ENCODE measurements at regions of chr5 and their contacts with region 1.

Region 1: DNA sequence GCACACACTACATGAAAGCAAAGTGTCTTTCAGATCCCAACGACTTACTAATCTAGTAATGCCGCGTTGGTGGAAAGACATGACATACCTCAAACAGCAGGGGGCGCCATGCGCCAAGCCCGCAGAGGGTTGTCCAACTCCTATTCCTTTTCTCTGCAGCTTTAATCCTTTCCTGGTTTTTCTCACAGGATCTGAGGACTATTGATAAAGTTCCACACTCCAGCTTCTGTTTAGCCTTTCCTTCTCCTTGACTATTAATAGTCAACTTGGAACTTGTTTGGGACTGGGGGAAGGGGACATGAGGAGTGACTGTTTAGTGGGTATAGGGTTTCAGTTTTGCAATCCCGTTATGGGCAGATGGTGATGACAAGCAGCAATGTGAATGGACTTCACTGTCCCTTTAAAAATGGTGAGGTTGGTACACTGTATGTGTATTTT is 62.9 kb downstream of the OTULIN start:
- DNase-seq: peak; percentile 76
- H3K4me3 Mint-ChIP-seq: no peak overlapping the region
- H3K27ac Mint-ChIP-seq: no peak overlapping the region
- H3K4me1 Mint-ChIP-seq: peaks cover 5% of the 10 kb centered on the region
- H3K27me3 Mint-ChIP-seq: no peaks in the 10 kb centered on the region

Region 2: DNA sequence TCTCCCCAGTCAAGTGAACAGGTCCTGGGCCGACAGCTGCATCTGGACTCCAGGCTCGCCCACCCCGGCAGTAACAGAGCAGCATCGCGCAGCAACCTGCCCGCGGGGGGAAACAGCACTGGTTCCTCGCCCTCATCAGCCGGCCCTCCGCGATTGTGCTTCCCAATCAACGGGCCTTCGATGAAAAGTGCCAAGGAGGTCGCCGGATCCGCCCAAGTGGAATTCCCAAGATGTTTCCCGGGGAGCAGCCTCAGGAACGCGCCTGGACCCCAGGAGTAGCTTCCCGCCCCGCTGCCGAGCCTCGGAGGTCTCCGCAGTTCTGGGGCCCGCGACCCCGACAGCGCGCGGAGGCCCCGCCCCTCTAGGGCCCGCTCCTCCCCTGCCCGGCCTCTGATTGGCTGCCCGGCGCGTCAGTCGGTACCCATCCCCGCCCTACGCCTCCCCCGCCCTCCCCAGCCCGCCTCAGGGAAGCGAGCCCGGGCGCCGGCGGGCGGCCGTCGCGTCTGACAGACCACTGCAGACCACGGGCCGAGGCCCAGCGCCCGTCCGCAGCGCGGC is 146.0 kb before region 1 on chr5 and contains the start of gene OTULINL:
- CTCF ChIA-PET with region 1: no interaction called
- POLR2A ChIA-PET with region 1: no interaction called
- DNase-seq: peak; percentile 88
- H3K4me3 Mint-ChIP-seq: peak within 1 kb of the TSS; percentile 79
- H3K27ac Mint-ChIP-seq: peak within 1 kb of the TSS; percentile 73
- H3K4me1 Mint-ChIP-seq: peaks cover 31% of the 10 kb centered on the region
- H3K27me3 Mint-ChIP-seq: peaks cover 19% of the 10 kb centered on the region
- total RNA-seq, gene OTULINL: 31.1 to 34.6 TPM

Region 3: GRCh38 chr5:14685757-14686156 is 41.7 kb before region 1 on chr5:
- CTCF ChIA-PET with region 1: interaction called, 25 read pairs
- POLR2A ChIA-PET with region 1: no interaction called
- DNase-seq: peak; percentile 42
- H3K4me3 Mint-ChIP-seq: no peak overlapping the region
- H3K27ac Mint-ChIP-seq: peak overlapping the region; percentile 21
- H3K4me1 Mint-ChIP-seq: peaks cover 15% of the 10 kb centered on the region
- H3K27me3 Mint-ChIP-seq: no peaks in the 10 kb centered on the region

Region 4: GRCh38 chr5:14706615-14707021 is 20.8 kb before region 1 on chr5:
- CTCF ChIA-PET with region 1: interaction called, 19 read pairs
- POLR2A ChIA-PET with region 1: no interaction called
- DNase-seq: peak; percentile 47
- H3K4me3 Mint-ChIP-seq: peak overlapping the region; percentile 69
- H3K27ac Mint-ChIP-seq: peak overlapping the region; percentile 100
- H3K4me1 Mint-ChIP-seq: peaks cover 80% of the 10 kb centered on the region
- H3K27me3 Mint-ChIP-seq: no peaks in the 10 kb centered on the region

Region 5: DNA sequence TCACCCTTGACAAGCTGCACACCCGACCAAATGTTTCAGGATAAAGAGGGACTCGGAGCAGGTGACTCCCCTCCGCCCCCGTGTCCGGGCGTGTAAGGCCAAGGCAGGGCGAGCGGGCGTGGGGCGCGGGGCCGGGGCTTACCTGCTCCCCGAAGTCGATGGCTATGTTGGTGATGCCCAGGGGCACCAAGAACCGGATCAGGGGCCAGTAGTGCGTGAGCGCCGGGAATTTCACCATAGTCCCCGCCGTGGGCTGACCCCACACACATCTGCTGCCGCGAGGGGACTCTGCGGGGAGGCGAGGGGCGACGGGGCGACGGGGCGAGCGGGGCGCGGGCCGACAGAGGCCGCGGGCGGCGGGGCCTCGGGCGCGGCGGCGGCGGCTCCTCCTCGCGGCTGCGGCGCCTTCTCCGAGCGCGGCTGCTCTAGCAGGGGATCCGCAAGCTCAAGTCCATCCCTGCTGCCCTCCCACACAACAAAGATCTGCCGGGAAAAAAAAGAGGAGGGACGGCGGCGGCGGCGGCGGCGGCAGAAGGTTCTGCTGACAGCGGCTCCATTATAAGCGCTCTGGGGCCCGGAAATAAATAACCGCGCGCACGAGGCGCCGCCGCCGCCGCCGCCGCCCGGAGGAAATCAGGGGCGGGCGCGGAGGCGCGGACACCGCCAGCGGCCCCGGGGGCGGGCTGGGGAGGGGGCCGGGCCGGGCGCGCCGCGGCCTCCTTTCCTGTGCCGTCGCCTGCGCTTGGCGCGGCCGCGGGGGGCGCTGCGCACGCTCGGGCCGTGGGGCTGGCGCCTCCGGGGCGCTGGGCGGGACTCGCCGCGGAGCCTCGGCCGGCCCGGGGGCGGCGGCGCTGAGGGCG is 144.0 kb after region 1 on chr5 and contains the start of gene ANKH:
- CTCF ChIA-PET with region 1: interaction called, 27 read pairs
- POLR2A ChIA-PET with region 1: interaction called, 3 read pairs
- DNase-seq: peak; percentile 86
- H3K4me3 Mint-ChIP-seq: peak within 1 kb of the TSS; percentile 89
- H3K27ac Mint-ChIP-seq: peak within 1 kb of the TSS; percentile 80
- H3K4me1 Mint-ChIP-seq: peaks cover 32% of the 10 kb centered on the region
- H3K27me3 Mint-ChIP-seq: peaks cover 4% of the 10 kb centered on the region
- total RNA-seq, gene ANKH: 83.7 to 87.0 TPM

Region 6: DNA sequence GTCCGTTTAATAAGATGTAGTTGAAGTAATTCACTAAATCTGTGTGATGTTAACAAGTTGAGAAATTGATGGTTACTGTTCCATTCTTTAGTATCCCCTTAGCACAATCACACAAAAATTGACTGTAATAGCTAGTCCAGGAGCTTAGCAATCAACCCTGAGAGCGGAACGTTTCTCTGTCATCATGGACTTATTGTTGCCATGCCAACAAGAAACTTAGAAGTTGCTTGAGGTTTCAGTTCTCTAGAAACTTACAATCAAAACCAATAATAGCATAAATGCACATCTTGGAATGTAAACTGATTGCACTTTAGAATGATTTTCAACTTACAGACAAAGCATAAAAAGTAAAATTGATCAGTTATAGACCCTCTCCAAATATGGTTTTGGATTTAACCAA is 269.6 kb after region 1 on chr5:
- CTCF ChIA-PET with region 1: interaction called, 111 read pairs
- POLR2A ChIA-PET with region 1: interaction called, 4 read pairs
- DNase-seq: no peak
- H3K4me3 Mint-ChIP-seq: no peak overlapping the region
- H3K27ac Mint-ChIP-seq: no peak overlapping the region
- H3K4me1 Mint-ChIP-seq: peaks cover 40% of the 10 kb centered on the region
- H3K27me3 Mint-ChIP-seq: peaks cover 18% of the 10 kb centered on the region

Region 7: GRCh38 chr5:15003511-15003920 is 276.1 kb after region 1 on chr5:
- CTCF ChIA-PET with region 1: interaction called, 111 read pairs
- POLR2A ChIA-PET with region 1: interaction called, 4 read pairs
- DNase-seq: peak; percentile 64
- H3K4me3 Mint-ChIP-seq: no peak overlapping the region
- H3K27ac Mint-ChIP-seq: no peak overlapping the region
- H3K4me1 Mint-ChIP-seq: peaks cover 19% of the 10 kb centered on the region
- H3K27me3 Mint-ChIP-seq: peaks cover 30% of the 10 kb centered on the region

Region 8: GRCh38 chr5:15013654-15014463 is 286.4 kb after region 1 on chr5:
- CTCF ChIA-PET with region 1: interaction called, 10 read pairs
- POLR2A ChIA-PET with region 1: no interaction called
- DNase-seq: no peak
- H3K4me3 Mint-ChIP-seq: no peak overlapping the region
- H3K27ac Mint-ChIP-seq: no peak overlapping the region
- H3K4me1 Mint-ChIP-seq: no peaks in the 10 kb centered on the region
- H3K27me3 Mint-ChIP-seq: peaks cover 2% of the 10 kb centered on the region